Body of pancreas (tissue), 4 donors: ENCODE measurements at regions of chr2 and their contacts with region 1.

Region 1: GRCh38 chr2:85830645-85831044 is 58.1 kb downstream of the ST3GAL5 start:
- DNase-seq: no peak
- ATAC-seq: no peak
- H3K4me3 ChIP-seq: no peak overlapping the region
- H3K27ac ChIP-seq: no peak overlapping the region
- H3K4me1 ChIP-seq: peaks cover 4% of the 10 kb centered on the region
- H3K27me3 ChIP-seq: no peaks in the 10 kb centered on the region
- CTCF ChIP-seq: no peak
- POLR2A ChIP-seq: no peak

Region 2: GRCh38 chr2:86079981-86080911 is 249.6 kb after region 1 on chr2:
- intact Hi-C with region 1: loop called (anchors 2 kb)
- DNase-seq: peak; percentile 84 to 91 (median 86)
- ATAC-seq: peak; percentile 81
- H3K4me3 ChIP-seq: no peak overlapping the region
- H3K27ac ChIP-seq: no peak overlapping the region
- H3K4me1 ChIP-seq: no peaks in the 10 kb centered on the region
- H3K27me3 ChIP-seq: no peaks in the 10 kb centered on the region
- CTCF ChIP-seq: peak; percentile 58 to 86 (median 76)
- POLR2A ChIP-seq: no peak